ENCODE measurements at regions of chr17 and their contacts with region 1.

Region 1: GRCh38 chr17:28657756-28658155 is 4.0 kb downstream of the SDF2 start:
- DNase-seq: peak in 2 of 7 donors; percentile 29 to 51
- H3K4me3 ChIP-seq: no peak overlapping the region
- H3K27ac ChIP-seq: peak overlapping the region in 1 of 5 donors; percentile 63
- H3K4me1 ChIP-seq: peaks cover 0 to 14% of the 10 kb centered on the region in 2 donors
- H3K27me3 ChIP-seq: no peaks in the 10 kb centered on the region
- CTCF ChIP-seq: no peak
- POLR2A ChIP-seq: no peak

Region 2: DNA sequence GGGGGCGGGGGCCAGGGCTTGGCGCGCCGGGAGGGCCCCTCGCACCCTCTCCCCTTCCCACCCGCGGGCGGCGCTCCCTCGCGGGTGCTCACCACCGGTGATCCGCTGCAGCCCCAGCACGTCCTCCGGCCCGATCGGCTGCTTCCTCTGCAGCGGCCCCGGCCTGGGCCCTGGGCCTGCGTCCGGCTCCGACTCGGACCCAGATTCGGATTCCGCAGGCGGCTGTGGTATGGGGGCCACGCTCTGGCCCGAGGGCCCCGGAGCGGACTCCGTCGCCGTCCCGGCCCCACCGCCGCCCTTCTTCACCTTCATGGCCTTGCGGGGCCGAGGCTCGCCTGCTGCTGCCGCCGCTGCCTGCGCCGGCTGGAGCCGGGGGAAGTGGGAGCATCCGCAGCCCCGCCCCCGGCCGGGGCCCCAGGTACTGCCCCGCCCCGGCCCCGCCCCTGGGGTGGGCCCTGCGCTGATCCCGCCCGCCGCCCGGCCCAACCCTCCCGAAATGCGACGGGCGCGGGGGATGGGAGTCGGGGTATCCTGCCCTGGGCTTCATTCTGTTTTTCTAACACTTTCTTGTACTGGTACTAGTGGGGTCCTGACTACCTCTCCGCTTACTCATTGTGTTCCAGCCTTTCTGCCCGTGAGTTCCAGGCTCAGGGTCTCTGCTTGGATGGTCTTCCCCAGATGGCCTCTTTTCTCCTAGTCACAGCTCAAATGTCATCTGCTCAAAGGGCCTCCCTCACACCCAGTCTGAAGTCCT is 105.3 kb before region 1 on chr17 and contains the start of gene UNC119:
- intact Hi-C with region 1: no loop called
- DNase-seq: peak; percentile 67 to 83 (median 80)
- H3K4me3 ChIP-seq: peak within 1 kb of the TSS in 3 of 4 donors; percentile 65 to 93 (median 79)
- H3K27ac ChIP-seq: peak within 1 kb of the TSS in 3 of 5 donors; percentile 62 to 72 (median 69)
- H3K4me1 ChIP-seq: peaks cover 7 to 22% of the 10 kb centered on the region in 2 donors
- H3K27me3 ChIP-seq: no peaks in the 10 kb centered on the region
- CTCF ChIP-seq: no peak
- POLR2A ChIP-seq: peak; percentile 55 to 64
- total RNA-seq, gene UNC119: 26.7 to 80.8 (median 41.3) TPM

Region 3: DNA sequence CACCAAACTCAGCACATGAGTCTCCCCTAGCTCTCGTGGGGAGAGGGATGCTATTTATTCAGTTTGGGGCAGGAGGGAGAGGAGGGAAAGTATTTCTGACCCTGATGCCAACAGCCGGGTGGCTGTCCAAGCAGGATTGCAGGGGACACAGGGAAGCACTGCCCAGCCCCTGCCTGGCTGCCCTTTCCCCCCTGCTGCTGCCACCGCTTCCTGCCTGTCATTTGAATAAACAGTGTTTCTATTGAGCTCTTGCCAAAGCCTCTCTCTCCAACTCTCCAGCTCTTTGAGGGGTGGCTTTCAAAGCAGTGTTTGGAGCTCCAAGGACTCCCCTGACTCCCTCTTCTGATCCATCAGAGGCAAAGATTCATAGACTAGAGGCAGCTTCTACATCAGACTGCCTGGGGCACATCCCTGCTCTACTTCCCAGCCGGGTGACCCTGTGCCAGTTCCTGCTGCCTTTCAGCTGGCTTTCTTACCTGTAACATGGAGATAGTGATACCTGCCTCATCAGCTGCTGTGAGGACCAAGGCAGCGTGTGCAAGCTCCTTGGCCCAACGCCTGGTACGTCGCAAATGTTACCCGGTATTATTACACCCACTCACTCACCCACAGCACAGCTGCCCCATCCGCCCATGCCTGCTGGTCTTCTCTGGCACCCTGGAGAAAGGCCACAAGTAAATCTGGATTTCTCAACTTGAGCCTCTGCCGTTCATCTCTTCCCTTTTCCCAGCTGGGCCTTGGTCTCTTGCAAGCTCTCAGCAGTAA is 44.4 kb after region 1 on chr17:
- intact Hi-C with region 1: loop called in 1 of 2 experiments (anchors 10 kb)
- DNase-seq: no peak
- H3K4me3 ChIP-seq: no peak overlapping the region
- H3K27ac ChIP-seq: peak overlapping the region in 1 of 5 donors; percentile 16
- H3K4me1 ChIP-seq: no peaks in the 10 kb centered on the region
- H3K27me3 ChIP-seq: no peaks in the 10 kb centered on the region
- CTCF ChIP-seq: no peak
- POLR2A ChIP-seq: no peak